Posterior vena cava (tissue), 2 donors: ENCODE measurements at regions of chr10 and their contacts with region 1.

Region 1: DNA sequence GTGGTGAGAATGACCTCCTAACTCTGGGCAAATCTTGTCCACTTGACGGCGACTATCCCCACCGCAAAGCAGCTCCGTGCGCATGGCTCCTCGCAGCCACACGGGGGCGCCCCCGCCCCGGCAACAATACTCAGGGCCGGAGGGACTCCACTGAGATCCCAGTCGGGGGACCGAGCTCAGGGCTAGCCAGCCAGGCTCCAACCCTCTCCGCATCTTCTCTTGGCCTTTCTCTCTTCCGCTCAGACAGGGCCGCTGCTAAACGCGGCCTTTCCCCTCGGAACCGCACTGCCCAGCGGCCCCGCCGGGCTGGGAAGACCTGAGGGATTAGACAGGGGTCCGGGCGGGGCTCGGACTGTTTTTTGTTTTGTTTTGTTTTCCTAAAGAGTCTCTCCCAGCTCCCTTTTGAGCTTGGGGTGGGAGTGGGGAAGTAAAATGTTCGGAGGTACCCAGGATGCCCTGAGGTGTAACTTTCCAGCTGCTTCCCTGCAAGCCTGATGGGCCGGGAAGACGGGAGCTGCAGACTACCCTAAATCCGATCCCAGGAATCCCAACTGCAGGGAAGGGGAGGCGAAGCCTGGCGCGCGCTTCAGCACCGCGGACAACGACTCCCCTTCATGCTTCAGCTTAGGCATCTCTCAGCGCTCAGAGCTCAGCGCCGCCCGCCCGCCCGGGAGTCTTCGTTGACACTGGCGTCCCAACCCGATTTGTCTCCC is 2.7 kb downstream of the KCNIP2 start:
- DNase-seq: peak; percentile 95

Region 2: DNA sequence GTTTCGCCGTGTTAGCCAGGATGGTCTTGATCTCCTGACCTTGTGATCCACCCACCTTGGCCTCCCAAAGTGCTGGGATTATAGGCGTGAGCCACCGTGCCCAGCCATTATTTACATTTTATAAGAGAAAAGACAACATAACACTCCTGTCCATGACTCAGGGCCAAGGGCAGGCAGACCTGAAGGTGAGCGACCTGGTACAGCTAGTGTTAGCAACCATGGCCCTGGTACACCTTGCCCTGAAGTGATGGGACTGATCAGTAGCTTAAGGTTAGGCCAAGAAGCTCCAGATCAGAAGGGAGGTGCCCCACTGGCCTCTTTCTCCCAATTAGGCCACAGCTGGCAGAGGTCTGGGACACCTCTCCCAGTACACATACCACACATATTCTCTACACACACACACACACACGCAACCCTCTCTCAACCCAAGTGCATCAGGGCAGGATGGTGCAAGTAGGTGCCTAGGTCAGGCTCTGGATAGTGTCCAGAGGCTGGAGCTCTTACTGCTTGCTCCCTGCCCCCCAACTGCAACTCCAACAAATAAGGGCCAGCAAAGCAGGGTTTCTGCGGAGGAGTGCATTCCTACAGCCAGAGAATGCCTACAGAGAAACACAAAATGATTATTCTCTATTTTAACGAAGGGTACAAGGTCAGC is 208.9 kb before region 1 on chr10:
- intact Hi-C with region 1: no loop called
- DNase-seq: no peak

Region 3: DNA sequence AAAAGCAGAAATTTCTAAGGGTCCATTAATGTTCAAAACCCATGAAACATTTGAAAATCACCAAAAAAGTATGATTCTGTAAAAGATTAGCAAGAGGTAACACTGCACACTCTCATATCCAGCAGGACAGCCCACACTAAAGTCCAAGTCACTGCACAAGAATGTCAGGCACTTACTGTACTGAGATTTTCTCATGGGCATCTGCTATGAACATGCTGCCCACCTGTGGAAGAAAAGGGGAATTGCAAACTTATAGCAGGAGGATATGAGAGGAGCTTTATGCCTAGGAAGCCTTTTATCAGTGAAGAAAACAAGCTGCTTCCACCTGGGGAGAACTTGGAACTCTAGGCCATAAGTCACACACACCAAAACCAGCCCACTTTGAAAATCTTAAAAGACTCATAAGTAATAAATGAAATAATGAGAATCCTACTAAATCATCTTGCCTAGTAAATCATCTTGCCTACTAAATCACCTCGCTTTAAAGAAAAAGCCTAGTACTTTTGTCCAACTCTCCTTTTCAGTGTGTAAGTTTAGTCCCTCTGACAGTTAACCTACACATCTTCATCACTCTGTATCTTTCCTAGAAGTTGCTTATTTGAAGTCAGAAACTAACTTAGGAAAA is 169.0 kb after region 1 on chr10:
- intact Hi-C with region 1: loop called (anchors 5 to 10 kb)
- DNase-seq: no peak

Region 4: GRCh38 chr10:102368072-102368471 is 527.2 kb after region 1 on chr10:
- intact Hi-C with region 1: loop called in 1 of 2 experiments (anchors 10 kb)
- DNase-seq: no peak